Activated T-helper 2 cell treated with anti-CD3 and anti-CD28 coated beads, Interferon-gamma antibody, Interleukin-2, Interleukin-4, amounts not matched to agents 10 μg/mL and 5 μg/mL and 100 μg/mL, durations not matched to agents 14 hours and 24 hours and 36 hours (primary cell): ENCODE measurements at regions of chr14 and their contacts with region 1.

Region 1: DNA sequence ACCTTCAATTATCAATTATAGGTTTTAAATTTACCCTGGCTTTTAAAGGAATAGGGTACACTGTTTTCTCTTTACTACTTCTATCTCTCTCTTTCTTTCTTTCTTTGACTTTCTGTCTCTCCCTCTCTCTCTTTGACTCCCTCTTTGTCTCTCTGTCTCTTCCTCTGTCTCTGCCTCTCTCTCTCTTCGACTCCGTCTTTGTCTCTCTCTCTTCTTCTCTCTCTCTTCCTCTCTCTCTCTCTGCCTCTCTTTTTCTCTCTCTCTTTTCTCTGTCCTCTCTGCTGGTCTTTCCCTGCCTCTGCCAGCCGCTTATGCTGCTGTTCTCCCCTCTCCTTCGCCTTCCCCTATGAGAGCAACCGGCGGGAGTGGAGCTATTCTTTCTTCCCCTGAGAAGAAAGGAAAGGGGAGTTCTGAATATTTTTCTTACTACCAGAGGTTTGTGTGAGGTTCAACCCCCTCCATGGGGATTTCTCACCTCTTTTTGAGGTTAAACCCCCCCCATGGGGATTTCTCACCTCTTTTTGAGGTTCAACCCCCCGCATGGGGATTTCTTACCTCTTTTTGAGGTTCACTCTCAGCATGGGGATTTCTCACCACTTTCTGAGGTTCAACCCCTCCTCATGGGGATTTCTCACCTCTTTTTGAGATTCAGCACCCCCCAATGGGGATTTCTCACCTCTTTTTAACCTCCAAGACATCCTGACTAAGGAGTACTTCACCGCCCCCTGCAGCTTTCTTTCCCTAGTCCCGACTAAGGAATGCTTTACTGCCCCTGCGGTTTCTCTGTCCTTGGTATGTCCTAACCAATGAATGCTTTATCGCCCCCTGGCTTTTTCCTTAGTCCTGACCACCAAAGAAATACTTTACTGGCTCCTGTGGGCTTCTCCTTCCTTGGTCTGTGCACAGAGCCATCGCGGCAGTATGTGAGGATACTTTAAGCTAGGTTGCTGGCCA is 27.4 kb upstream of the DDHD1 start:
- DNase-seq: no peak
- H3K4me3 Mint-ChIP-seq: no peak overlapping the region
- H3K27ac Mint-ChIP-seq: peak overlapping the region; percentile 40
- H3K4me1 Mint-ChIP-seq: peaks cover 26% of the 10 kb centered on the region
- H3K27me3 Mint-ChIP-seq: peaks cover 1% of the 10 kb centered on the region

Region 2: GRCh38 chr14:53190938-53191337 is 10.4 kb after region 1 on chr14:
- intact Hi-C with region 1: loop called (anchors 1 kb)
- DNase-seq: no peak
- H3K4me3 Mint-ChIP-seq: no peak overlapping the region
- H3K27ac Mint-ChIP-seq: peak overlapping the region; percentile 84
- H3K4me1 Mint-ChIP-seq: peaks cover 33% of the 10 kb centered on the region
- H3K27me3 Mint-ChIP-seq: no peaks in the 10 kb centered on the region